ENCODE measurements at regions of chr5 and their contacts with region 1.

Region 1: GRCh38 chr5:104213216-104213615 is 650.6 kb upstream of the NUDT12 start:
- DNase-seq: no peak
- ATAC-seq: no peak
- H3K4me3 ChIP-seq: no peak overlapping the region
- H3K27ac ChIP-seq: no peak overlapping the region
- H3K4me1 ChIP-seq: no peaks in the 10 kb centered on the region
- H3K27me3 ChIP-seq: no peaks in the 10 kb centered on the region
- CTCF ChIP-seq: no peak
- EP300 ChIP-seq: no peak
- POLR2A ChIP-seq: no peak
- RAD21 ChIP-seq: no peak

Region 2: GRCh38 chr5:104223885-104224773 is 10.9 kb after region 1 on chr5:
- CTCF ChIA-PET with region 1: interaction called, 10 read pairs
- POLR2A ChIA-PET with region 1: interaction called, 5 read pairs
- RAD21 ChIA-PET with region 1: no interaction called
- SMC1A ChIA-PET with region 1: interaction called, 10 read pairs
- in situ Hi-C with region 1: no loop called
- intact Hi-C with region 1: no loop called
- DNase-seq: no peak
- ATAC-seq: peak; percentile 52
- H3K4me3 ChIP-seq: no peak overlapping the region
- H3K27ac ChIP-seq: no peak overlapping the region
- H3K4me1 ChIP-seq: no peaks in the 10 kb centered on the region
- H3K27me3 ChIP-seq: no peaks in the 10 kb centered on the region
- CTCF ChIP-seq: no peak
- EP300 ChIP-seq: no peak
- POLR2A ChIP-seq: no peak
- RAD21 ChIP-seq: no peak

Region 3: GRCh38 chr5:104267320-104268015 is 54.3 kb after region 1 on chr5:
- CTCF ChIA-PET with region 1: no interaction called
- POLR2A ChIA-PET with region 1: no interaction called
- RAD21 ChIA-PET with region 1: no interaction called
- SMC1A ChIA-PET with region 1: no interaction called
- in situ Hi-C with region 1: no loop called
- intact Hi-C with region 1: no loop called
- DNase-seq: no peak
- ATAC-seq: no peak
- H3K4me3 ChIP-seq: no peak overlapping the region
- H3K27ac ChIP-seq: no peak overlapping the region
- H3K4me1 ChIP-seq: no peaks in the 10 kb centered on the region
- H3K27me3 ChIP-seq: no peaks in the 10 kb centered on the region
- CTCF ChIP-seq: no peak
- EP300 ChIP-seq: no peak
- POLR2A ChIP-seq: no peak
- RAD21 ChIP-seq: no peak

Measured in GM12878 (cell line).